ENCODE measurements at regions of chr6 and their contacts with region 1.

Region 1: DNA sequence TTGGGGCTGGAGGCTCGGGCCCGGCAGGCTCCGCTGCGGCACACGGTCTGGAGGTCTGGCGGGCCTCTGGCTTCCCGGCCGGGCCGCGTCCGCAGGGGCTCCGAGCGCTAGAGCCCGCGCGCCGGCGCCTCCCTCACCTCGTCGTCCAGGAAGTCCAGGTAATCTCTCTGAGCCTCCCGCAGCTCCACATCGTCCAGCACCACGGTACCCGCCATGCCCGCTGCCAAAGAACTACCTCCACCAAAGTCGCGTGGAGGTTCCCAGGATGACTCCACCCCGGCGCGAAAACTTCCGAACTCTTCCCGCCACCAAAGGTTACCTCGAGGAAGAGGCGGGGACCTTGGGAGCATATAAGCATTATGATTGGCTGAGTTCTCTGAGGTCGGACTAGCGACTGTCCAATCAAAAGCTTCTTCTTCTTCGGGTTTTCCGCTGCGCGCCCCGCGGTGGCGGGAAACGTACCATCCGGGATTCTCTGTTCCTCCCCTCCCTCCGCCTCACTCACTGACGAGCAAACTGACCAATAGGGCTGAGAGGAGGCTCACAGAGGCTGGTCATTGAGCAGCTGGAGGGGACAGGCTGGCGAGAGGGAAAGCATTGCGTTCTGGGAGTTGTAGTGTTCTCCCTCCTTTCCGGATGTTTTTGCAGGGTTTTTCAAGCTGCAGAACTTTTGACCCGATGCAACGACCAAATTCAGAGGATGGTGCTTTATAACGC is at the start of gene MCM3:
- DNase-seq: peak; percentile 89 to 99 (median 94)
- ATAC-seq: peak; percentile 95
- H3K4me3 ChIP-seq: peak within 1 kb of the TSS; percentile 67 to 74
- H3K4me3 Mint-ChIP-seq: peak within 1 kb of the TSS; percentile 50
- H3K27ac ChIP-seq: peak within 1 kb of the TSS; percentile 56 to 63
- H3K27ac Mint-ChIP-seq: peak within 1 kb of the TSS; percentile 63
- H3K4me1 ChIP-seq: peaks cover 36% of the 10 kb centered on the region
- H3K4me1 Mint-ChIP-seq: peaks cover 44% of the 10 kb centered on the region
- H3K27me3 ChIP-seq: no peaks in the 10 kb centered on the region
- H3K27me3 Mint-ChIP-seq: no peaks in the 10 kb centered on the region
- CTCF ChIP-seq: no peak
- total RNA-seq, gene MCM3: 6.2 to 6.8 TPM

Region 2: DNA sequence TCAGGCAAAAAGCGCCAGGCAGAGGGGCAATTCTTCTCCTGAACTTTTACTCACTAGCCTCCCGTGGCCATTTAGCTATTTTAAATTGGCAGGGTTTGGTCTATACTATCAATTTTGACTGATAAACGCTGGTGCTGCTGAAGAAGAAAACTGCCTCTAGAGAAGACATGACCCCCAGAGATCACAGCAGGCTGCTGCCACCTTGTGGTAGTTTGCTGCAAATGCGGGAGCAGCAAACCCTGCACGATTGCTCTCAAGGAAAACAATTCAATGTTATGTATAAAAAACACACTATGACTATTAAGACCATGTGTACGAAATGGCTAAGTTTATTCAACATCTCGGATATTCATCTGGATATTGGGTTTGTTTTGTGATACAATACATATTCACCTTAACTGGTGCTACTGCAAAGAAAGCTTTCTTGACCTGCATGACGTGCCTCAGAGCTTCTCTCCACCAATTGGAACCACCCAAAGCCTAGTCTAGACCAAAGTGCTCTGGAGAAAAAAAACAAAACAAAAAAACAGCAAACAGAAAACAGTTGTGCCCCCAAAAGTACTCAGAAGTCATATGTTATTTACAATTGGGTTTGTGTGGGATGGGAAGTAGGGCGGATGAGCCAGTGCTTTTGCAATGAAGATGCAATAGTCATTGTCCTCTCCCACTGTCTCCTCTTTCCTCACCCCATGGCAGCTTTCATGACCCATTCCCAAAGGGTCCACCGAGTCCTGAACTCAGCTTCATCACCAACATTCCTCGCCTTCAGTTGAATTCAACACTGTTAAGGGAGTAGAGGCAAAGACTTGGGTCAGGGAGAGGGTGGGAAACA is 20.7 kb before region 1 on chr6:
- CTCF ChIA-PET with region 1: interaction called, 43 read pairs
- POLR2A ChIA-PET with region 1: interaction called, 3 read pairs
- intact Hi-C with region 1: no loop called
- DNase-seq: peak; percentile 44 to 79 (median 67)
- ATAC-seq: peak; percentile 79
- H3K4me3 ChIP-seq: no peak overlapping the region
- H3K4me3 Mint-ChIP-seq: no peak overlapping the region
- H3K27ac ChIP-seq: no peak overlapping the region
- H3K27ac Mint-ChIP-seq: no peak overlapping the region
- H3K4me1 ChIP-seq: peaks cover 12% of the 10 kb centered on the region
- H3K4me1 Mint-ChIP-seq: peaks cover 14% of the 10 kb centered on the region
- H3K27me3 ChIP-seq: no peaks in the 10 kb centered on the region
- H3K27me3 Mint-ChIP-seq: no peaks in the 10 kb centered on the region
- CTCF ChIP-seq: peak; percentile 96

Region 3: GRCh38 chr6:52333840-52334200 is 49.2 kb after region 1 on chr6:
- CTCF ChIA-PET with region 1: interaction called, 6 read pairs
- POLR2A ChIA-PET with region 1: interaction called, 4 read pairs
- intact Hi-C with region 1: loop called in 1 of 2 experiments (anchors 2 kb)
- DNase-seq: peak in 5 of 9 experiments; percentile 1 to 78 (median 23)
- ATAC-seq: peak; percentile 76
- H3K4me3 ChIP-seq: no peak overlapping the region
- H3K4me3 Mint-ChIP-seq: peak overlapping the region; percentile 69
- H3K27ac ChIP-seq: peak overlapping the region; percentile 56 to 85
- H3K27ac Mint-ChIP-seq: peak overlapping the region; percentile 94
- H3K4me1 ChIP-seq: peaks cover 66% of the 10 kb centered on the region
- H3K4me1 Mint-ChIP-seq: peaks cover 68% of the 10 kb centered on the region
- H3K27me3 ChIP-seq: no peaks in the 10 kb centered on the region
- H3K27me3 Mint-ChIP-seq: no peaks in the 10 kb centered on the region
- CTCF ChIP-seq: no peak

Region 4: GRCh38 chr6:52399511-52400312 is 115.1 kb after region 1 on chr6:
- CTCF ChIA-PET with region 1: interaction called, 229 read pairs
- POLR2A ChIA-PET with region 1: interaction called, 68 read pairs
- intact Hi-C with region 1: loop called (anchors 1 kb)
- DNase-seq: peak in 6 of 9 experiments; percentile 25 to 76 (median 52)
- ATAC-seq: peak; percentile 52
- H3K4me3 ChIP-seq: no peak overlapping the region
- H3K4me3 Mint-ChIP-seq: peak overlapping the region; percentile 53
- H3K27ac ChIP-seq: peak overlapping the region; percentile 45 to 75
- H3K27ac Mint-ChIP-seq: peak overlapping the region; percentile 93
- H3K4me1 ChIP-seq: peaks cover 71% of the 10 kb centered on the region
- H3K4me1 Mint-ChIP-seq: peaks cover 82% of the 10 kb centered on the region
- H3K27me3 ChIP-seq: no peaks in the 10 kb centered on the region
- H3K27me3 Mint-ChIP-seq: no peaks in the 10 kb centered on the region
- CTCF ChIP-seq: peak; percentile 96

Region 5: DNA sequence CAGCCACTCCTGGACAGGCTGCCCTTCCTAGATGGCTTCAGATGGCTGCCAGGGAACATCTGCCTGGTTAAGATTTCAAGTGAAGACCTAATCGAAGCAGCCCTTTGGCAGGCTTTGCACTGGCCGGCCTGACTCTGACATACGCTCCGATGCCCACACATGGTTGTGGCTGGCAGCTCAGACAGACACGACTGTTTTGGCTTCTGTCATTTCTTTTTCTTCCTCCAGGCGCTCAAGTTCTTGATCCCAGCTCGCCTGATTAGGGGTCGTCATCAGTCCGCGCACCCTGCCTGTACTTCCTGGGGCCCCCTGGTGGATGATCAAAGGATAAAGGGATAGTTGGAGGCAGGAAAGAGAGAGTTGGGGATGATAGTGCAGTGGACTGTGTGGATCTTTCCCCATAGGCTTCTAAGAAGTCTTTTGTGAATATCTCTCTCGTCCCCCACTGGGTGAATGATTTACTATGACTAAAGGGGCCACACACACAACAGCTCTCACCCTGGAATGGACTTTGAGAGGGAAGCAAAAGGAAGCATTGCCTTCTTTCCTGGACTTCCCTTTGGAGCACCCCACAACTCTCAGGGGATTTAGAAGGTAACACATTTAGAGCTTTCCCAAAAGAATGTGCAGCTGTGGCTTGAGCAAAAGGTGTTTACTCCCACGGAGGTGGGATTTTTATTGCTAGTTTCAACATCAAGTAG is 313.7 kb after region 1 on chr6:
- CTCF ChIA-PET with region 1: interaction called, 5 read pairs
- POLR2A ChIA-PET with region 1: no interaction called
- intact Hi-C with region 1: loop called in 1 of 2 experiments (anchors 2 kb)
- DNase-seq: peak in 4 of 9 experiments; percentile 30 to 58 (median 40)
- ATAC-seq: peak; percentile 62
- H3K4me3 ChIP-seq: no peak overlapping the region
- H3K4me3 Mint-ChIP-seq: no peak overlapping the region
- H3K27ac ChIP-seq: no peak overlapping the region
- H3K27ac Mint-ChIP-seq: no peak overlapping the region
- H3K4me1 ChIP-seq: no peaks in the 10 kb centered on the region
- H3K4me1 Mint-ChIP-seq: peaks cover 8% of the 10 kb centered on the region
- H3K27me3 ChIP-seq: no peaks in the 10 kb centered on the region
- H3K27me3 Mint-ChIP-seq: peaks cover 12% of the 10 kb centered on the region
- CTCF ChIP-seq: no peak

Region 6: DNA sequence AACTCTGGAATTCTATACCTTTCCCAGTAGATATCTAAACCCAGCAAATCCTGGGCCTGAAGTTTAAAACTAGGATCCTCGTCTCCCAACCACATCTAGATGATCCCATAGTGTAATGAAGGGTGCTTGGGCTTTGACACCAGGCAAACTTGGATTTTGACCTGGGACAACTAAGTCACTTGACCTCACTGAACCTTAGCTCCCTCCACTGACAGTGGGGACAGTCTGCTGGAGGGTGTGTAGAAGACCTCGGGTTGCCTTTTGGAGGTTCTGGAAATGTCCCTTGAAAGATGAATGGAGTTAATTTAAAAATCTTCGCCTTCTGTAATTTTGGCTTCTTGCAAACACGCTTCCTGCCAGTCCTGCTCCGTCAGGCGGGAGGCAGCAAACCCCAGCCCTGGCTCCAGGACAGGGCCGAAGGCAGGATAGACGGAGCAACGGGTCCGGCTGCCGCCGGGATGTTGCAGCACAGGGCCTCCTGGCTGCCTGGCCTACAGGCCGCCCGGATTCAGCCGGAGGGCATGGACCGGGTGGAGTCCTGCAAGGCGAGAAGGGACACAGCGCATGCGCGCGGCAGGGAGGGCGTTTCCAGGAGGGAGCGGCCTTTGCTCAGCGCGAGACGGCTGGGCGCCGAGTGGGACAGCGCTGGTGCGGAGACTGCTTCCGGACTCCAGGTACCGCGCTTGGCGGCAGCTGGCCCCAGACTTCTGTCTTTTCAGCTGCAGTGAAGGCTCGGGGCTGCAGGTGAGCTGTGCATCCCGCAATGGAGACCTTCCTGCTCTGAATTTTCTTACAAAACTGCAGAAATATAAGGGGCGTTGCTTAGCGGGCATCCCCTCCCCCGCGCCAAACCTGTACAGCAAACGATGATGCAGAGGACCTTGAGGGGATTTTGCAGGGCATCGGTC is 386.1 kb after region 1 on chr6 and contains the start of gene TMEM14A:
- CTCF ChIA-PET with region 1: interaction called, 8 read pairs
- POLR2A ChIA-PET with region 1: interaction called, 4 read pairs
- intact Hi-C with region 1: loop called in 1 of 2 experiments (anchors 1 kb)
- DNase-seq: peak; percentile 75 to 96 (median 90)
- ATAC-seq: peak; percentile 97
- H3K4me3 ChIP-seq: peak within 1 kb of the TSS; percentile 78 to 83
- H3K4me3 Mint-ChIP-seq: peak within 1 kb of the TSS; percentile 90
- H3K27ac ChIP-seq: peak within 1 kb of the TSS; percentile 28 to 36
- H3K27ac Mint-ChIP-seq: peak within 1 kb of the TSS; percentile 81
- H3K4me1 ChIP-seq: peaks cover 13% of the 10 kb centered on the region
- H3K4me1 Mint-ChIP-seq: peaks cover 30% of the 10 kb centered on the region
- H3K27me3 ChIP-seq: no peaks in the 10 kb centered on the region
- H3K27me3 Mint-ChIP-seq: no peaks in the 10 kb centered on the region
- CTCF ChIP-seq: no peak
- total RNA-seq, gene TMEM14A: 1.7 to 1.8 TPM

Region 7: GRCh38 chr6:53359072-53359842 is 1074.6 kb after region 1 on chr6:
- CTCF ChIA-PET with region 1: no interaction called
- POLR2A ChIA-PET with region 1: no interaction called
- intact Hi-C with region 1: loop called in 1 of 2 experiments (anchors 10 kb)
- DNase-seq: peak; percentile 79 to 95 (median 86)
- ATAC-seq: peak; percentile 76
- H3K4me3 ChIP-seq: peak overlapping the region; percentile 67 to 72
- H3K4me3 Mint-ChIP-seq: peak overlapping the region; percentile 88
- H3K27ac ChIP-seq: peak overlapping the region; percentile 83 to 96
- H3K27ac Mint-ChIP-seq: peak overlapping the region; percentile 96
- H3K4me1 ChIP-seq: peaks cover 38% of the 10 kb centered on the region
- H3K4me1 Mint-ChIP-seq: peaks cover 43% of the 10 kb centered on the region
- H3K27me3 ChIP-seq: no peaks in the 10 kb centered on the region
- H3K27me3 Mint-ChIP-seq: no peaks in the 10 kb centered on the region
- CTCF ChIP-seq: no peak

Measured in CD8-positive, alpha-beta T cell (primary cell).